ENCODE measurements at regions of chr1 and their contacts with region 1.

Region 1: GRCh38 chr1:209565759-209566678 is 17.5 kb upstream of the CAMK1G start:
- DNase-seq: peak; percentile 53 to 94 (median 82)
- H3K4me3 ChIP-seq: no peak overlapping the region
- H3K27ac ChIP-seq: no peak overlapping the region
- H3K27me3 ChIP-seq: peaks cover 0 to 5% (median 0%) of the 10 kb centered on the region in 45 donors
- CTCF ChIP-seq: peak; percentile 42 to 95 (median 87)

Region 2: DNA sequence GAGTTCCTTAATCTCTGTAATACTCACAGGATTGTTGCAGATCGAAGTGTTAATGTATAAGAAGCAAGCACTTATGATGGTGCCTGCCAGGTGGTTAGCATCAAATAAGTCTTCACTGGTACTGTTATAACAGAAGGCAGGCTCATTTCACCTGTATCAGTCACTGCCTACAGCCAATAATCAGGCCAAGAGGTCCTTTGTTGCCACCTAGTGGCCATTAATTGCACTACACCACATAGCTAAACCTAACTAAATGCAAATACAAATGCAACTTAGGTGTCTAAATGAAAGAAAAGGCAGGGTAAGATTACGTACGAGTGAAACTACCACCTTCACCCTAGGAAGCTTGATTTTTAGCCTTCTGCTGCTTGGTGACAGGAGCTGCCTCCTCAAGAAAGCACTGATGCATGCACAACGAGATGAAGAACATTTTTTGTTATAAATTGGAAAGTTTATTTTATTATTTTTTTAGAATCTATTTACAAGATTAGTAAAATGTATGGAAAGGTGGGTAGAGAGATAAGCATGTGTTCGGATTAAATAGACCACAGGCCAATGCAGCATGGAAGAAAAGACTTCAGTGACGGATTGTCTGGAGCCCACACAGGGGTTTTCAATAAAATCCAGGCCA is 317.3 kb before region 1 on chr1:
- intact Hi-C with region 1: loop called in 1 of 2 experiments (anchors 2 kb)
- DNase-seq: peak in 4 of 10 donors; percentile 36 to 60 (median 51)
- H3K4me3 ChIP-seq: no peak overlapping the region
- H3K27ac ChIP-seq: no peak overlapping the region
- H3K27me3 ChIP-seq: peaks cover 0 to 16% (median 0%) of the 10 kb centered on the region in 45 donors
- CTCF ChIP-seq: peak; percentile 79 to 98 (median 90)